ENCODE measurements at regions of chr19 and their contacts with region 1.

Region 1: DNA sequence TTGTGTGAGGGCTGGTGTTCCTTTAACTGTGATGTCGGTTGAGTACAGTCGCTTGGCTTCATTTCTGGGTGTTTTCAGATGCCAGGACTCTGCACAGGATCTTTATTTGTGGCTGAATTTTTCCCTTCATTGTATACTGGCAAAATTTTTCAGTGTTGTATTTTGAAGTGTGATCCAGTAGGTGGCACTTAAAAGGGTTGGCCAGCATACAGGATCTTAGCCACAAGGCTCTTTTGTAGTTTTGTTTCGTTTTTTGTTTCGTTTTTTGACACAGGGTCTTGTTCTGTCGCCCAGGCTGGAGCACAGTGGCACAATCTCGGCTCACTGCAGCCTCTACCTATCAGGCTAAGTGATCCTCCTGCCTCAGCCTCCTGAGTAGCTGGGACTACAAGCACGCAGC is 8.7 kb downstream of the FCAR start:
- DNase-seq: peak in 1 of 2 experiments; percentile 24
- ATAC-seq: peak in 1 of 2 experiments; percentile 57; a peak in 4 of 6 replicates
- H3K4me3 ChIP-seq: no peak overlapping the region
- H3K27ac ChIP-seq: no peak overlapping the region
- H3K4me1 ChIP-seq: no peaks in the 10 kb centered on the region
- CTCF ChIP-seq: no peak
- EP300 ChIP-seq: no peak
- POLR2A ChIP-seq: no peak
- RAD21 ChIP-seq: no peak

Region 2: GRCh38 chr19:54905803-54906511 is 23.2 kb after region 1 on chr19 and contains the start of gene NCR1:
- CTCF ChIA-PET with region 1: interaction called, 20 read pairs
- POLR2A ChIA-PET with region 1: no interaction called
- DNase-seq: no peak
- ATAC-seq: peak; percentile 45 to 48; a peak in 5 of 6 replicates
- H3K4me3 ChIP-seq: no peak within 1 kb of the TSS
- H3K27ac ChIP-seq: no peak within 1 kb of the TSS
- H3K4me1 ChIP-seq: no peaks in the 10 kb centered on the region
- CTCF ChIP-seq: no peak
- EP300 ChIP-seq: no peak
- POLR2A ChIP-seq: no peak
- RAD21 ChIP-seq: no peak
- polyA plus RNA-seq, gene NCR1: not detected in 2 replicates

Region 3: DNA sequence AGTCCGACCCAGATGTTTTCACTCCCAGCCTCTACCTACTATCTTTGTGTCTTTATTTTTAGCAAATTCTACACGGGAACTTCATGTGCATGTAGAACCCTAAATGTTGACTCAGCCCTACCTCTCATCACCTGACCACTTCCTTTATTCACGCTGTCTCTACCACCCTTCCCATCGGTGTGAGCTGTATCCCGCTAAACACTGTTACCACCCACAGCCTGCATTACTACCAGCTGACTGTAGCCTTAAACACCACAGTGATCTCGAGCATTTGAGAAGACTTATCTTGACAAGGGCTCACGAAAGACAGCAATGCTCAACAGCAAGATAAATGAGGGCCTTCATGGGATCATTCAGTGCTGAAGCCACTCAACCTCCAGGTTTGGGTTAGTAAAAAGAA is 38.3 kb after region 1 on chr19:
- CTCF ChIA-PET with region 1: interaction called, 25 read pairs
- POLR2A ChIA-PET with region 1: no interaction called
- DNase-seq: no peak
- ATAC-seq: no peak
- H3K4me3 ChIP-seq: no peak overlapping the region
- H3K27ac ChIP-seq: no peak overlapping the region
- H3K4me1 ChIP-seq: no peaks in the 10 kb centered on the region
- CTCF ChIP-seq: no peak
- EP300 ChIP-seq: no peak
- POLR2A ChIP-seq: no peak
- RAD21 ChIP-seq: no peak